ENCODE measurements at regions of chr4 and their contacts with region 1.

Region 1: DNA sequence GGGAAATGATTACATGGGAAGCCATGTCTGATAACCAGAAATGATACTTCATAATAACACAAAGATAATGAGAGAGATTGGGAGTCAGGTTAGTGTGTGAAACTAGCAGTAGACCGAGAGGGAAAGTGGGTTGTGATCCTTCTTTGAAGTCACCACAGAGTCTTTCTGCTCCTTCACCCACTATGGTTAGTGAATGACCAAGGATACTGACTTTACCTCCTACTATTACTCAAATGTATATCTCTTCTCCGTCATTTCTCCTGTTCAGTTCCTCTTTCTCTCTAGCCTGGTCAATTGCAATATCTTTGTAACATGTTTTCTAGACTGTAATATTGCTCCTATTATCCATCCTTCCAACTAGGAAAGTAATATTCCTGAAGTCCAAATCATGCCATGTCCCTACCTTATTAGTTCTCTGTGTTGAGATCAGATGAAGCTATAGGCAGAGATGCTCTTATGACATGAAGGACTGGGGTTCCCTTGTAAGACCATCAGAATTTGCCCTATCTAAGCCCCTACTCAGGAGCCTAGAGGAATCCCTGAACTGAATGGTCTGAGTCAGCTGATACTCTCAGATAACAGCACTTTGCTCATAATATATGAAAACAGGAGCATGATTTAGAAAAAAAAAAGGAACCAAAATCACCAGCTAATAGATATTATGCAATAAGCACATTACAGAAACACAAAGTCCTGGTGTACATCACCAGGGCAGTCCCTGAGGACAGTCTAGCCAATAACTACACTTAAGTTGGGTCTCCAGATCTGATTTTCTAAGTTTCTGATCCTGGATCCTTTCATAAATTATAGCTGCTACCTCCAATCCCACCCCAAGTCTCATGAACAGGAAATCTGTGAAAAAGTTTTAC is 81.2 kb downstream of the SHROOM3 start:
- DNase-seq: no peak
- H3K4me3 ChIP-seq: no peak overlapping the region
- H3K27ac ChIP-seq: no peak overlapping the region
- H3K4me1 ChIP-seq: peaks cover 0 to 2% of the 10 kb centered on the region in 2 donors
- H3K27me3 ChIP-seq: no peaks in the 10 kb centered on the region
- CTCF ChIP-seq: no peak

Region 2: GRCh38 chr4:76293772-76294171 is 222.4 kb before region 1 on chr4:
- intact Hi-C with region 1: no loop called
- DNase-seq: no peak
- H3K4me3 ChIP-seq: no peak overlapping the region
- H3K27ac ChIP-seq: no peak overlapping the region
- H3K4me1 ChIP-seq: no peaks in the 10 kb centered on the region
- H3K27me3 ChIP-seq: no peaks in the 10 kb centered on the region
- CTCF ChIP-seq: no peak

Region 3: DNA sequence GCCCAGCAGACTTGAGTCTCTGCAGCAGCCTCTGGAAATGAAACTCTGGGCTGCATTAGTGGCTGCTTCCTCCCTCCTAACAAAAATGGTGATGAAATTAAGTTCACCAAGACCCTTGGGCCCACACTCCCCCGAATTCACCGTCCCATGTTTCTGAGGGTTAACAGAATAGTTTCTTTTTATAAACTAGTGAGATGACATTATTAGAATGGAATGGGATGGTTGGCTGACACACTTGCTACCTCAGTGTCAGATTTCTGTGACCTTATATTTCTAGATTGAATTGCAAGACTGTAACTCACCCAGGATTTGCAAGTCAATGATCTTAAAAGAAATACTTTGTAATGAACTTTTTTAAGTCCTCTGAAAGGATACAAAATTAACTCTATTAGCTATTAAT is 46.0 kb after region 1 on chr4:
- intact Hi-C with region 1: loop called (anchors 5 kb)
- DNase-seq: no peak
- H3K4me3 ChIP-seq: no peak overlapping the region
- H3K27ac ChIP-seq: peak overlapping the region; percentile 38 to 68
- H3K4me1 ChIP-seq: peaks cover 4 to 32% of the 10 kb centered on the region in 2 donors
- H3K27me3 ChIP-seq: no peaks in the 10 kb centered on the region
- CTCF ChIP-seq: no peak

Region 4: GRCh38 chr4:76611164-76611911 is 95.1 kb after region 1 on chr4:
- intact Hi-C with region 1: loop called (anchors 2 kb)
- DNase-seq: peak in 1 of 2 donors; percentile 83
- H3K4me3 ChIP-seq: peak overlapping the region; percentile 28 to 41
- H3K27ac ChIP-seq: peak overlapping the region; percentile 78 to 85
- H3K4me1 ChIP-seq: peaks cover 15 to 67% of the 10 kb centered on the region in 2 donors
- H3K27me3 ChIP-seq: no peaks in the 10 kb centered on the region
- CTCF ChIP-seq: peak in 2 of 3 experiments; percentile 10 to 20

Region 5: DNA sequence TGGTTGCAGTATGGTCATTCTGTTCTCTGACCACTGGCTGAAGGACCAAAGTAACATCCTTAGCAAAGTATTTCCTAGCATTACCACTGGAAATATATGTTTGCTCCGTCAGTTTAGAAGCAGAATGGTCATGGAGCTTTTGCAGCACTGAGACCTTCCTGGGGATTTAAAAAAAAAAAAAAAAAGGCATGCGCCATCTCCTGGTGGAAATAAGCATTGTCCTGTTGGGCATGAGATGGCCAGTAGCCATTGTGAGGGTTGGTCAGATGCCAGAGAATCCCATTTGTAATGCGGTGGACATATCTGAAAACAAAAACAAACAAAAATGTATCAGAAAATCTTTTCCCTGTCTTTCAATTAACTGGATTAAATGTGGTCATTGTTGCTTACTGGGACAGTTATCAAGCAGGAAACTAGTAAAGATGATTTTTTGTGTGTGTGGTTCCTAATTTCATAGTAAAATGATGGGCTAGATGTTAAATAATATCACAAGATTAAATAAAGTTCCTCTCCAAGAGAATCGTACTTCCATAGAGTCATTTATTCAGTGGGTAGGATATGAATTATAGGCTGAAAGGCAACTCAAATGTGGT is 242.2 kb after region 1 on chr4:
- intact Hi-C with region 1: loop called (anchors 2 kb)
- DNase-seq: no peak
- H3K4me3 ChIP-seq: no peak overlapping the region
- H3K27ac ChIP-seq: peak overlapping the region; percentile 51 to 72
- H3K4me1 ChIP-seq: peaks cover 13 to 22% of the 10 kb centered on the region in 2 donors
- H3K27me3 ChIP-seq: no peaks in the 10 kb centered on the region
- CTCF ChIP-seq: peak; percentile 51 to 78 (median 70)

Region 6: DNA sequence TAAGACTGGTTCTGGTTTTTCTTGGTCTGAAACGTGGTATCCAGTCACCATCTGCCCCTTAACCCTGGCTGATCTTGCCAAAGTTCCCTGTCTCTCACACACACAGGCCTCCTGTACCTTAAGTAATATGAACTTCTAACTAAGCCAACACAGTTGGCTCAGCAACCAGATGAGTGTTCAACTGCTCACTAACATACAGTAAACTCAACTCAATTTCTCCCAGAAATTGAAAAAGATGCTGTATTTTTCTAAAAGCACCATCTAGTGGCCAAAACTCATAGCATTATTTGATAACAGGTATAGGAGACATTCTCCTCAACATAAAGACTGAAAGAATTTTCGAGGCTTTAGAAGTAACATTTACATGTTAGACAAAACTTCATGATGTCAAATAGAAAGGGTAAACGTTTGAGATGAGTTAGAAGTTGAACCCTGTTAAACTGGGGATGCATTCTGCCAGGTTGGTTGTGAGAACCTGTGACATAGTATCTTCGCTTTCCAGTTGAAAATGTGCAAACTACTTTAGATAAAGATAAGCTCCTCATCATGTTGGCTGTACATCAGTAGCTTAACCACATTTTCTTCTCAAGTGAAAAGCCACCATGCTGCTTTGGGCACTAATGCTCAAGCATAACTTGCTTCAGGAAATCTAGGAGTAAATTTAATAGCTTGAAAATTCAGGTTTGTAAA is 528.4 kb after region 1 on chr4:
- intact Hi-C with region 1: loop called (anchors 2 kb)
- DNase-seq: no peak
- H3K4me3 ChIP-seq: no peak overlapping the region
- H3K27ac ChIP-seq: peak overlapping the region; percentile 31 to 55
- H3K4me1 ChIP-seq: peaks cover 0 to 11% of the 10 kb centered on the region in 2 donors
- H3K27me3 ChIP-seq: no peaks in the 10 kb centered on the region
- CTCF ChIP-seq: peak; percentile 32 to 56 (median 46)

Measured in ascending aorta (tissue), 2 donors.